ENCODE measurements at regions of chr1 and their contacts with region 1.

Region 1: GRCh38 chr1:109161858-109162606 is 48.1 kb downstream of the ELAPOR1 start:
- DNase-seq: peak in 2 of 5 donors; percentile 5 to 25
- H3K4me3 ChIP-seq: no peak overlapping the region
- H3K4me3 Mint-ChIP-seq: peak overlapping the region in 6 of 7 donors; percentile 5 to 81 (median 55)
- H3K27ac ChIP-seq: no peak overlapping the region
- H3K27ac Mint-ChIP-seq: peak overlapping the region; percentile 48 to 96 (median 78)
- H3K4me1 ChIP-seq: peaks cover 7% of the 10 kb centered on the region
- H3K4me1 Mint-ChIP-seq: peaks cover 13 to 16% (median 16%) of the 10 kb centered on the region in 3 donors
- H3K27me3 ChIP-seq: no peaks in the 10 kb centered on the region
- H3K27me3 Mint-ChIP-seq: no peaks in the 10 kb centered on the region

Region 2: GRCh38 chr1:109083923-109084322 is 78.1 kb before region 1 on chr1:
- CTCF ChIA-PET with region 1: no interaction called
- POLR2A ChIA-PET with region 1: no interaction called
- DNase-seq: no peak
- H3K4me3 ChIP-seq: no peak overlapping the region
- H3K4me3 Mint-ChIP-seq: peak overlapping the region in 1 of 7 donors; percentile 41
- H3K27ac ChIP-seq: no peak overlapping the region
- H3K27ac Mint-ChIP-seq: no peak overlapping the region
- H3K4me1 ChIP-seq: no peaks in the 10 kb centered on the region
- H3K4me1 Mint-ChIP-seq: peaks cover 0 to under 1% (median 0%) of the 10 kb centered on the region in 3 donors
- H3K27me3 ChIP-seq: no peaks in the 10 kb centered on the region
- H3K27me3 Mint-ChIP-seq: peaks cover 0 to 5% of the 10 kb centered on the region in 2 donors

Region 3: DNA sequence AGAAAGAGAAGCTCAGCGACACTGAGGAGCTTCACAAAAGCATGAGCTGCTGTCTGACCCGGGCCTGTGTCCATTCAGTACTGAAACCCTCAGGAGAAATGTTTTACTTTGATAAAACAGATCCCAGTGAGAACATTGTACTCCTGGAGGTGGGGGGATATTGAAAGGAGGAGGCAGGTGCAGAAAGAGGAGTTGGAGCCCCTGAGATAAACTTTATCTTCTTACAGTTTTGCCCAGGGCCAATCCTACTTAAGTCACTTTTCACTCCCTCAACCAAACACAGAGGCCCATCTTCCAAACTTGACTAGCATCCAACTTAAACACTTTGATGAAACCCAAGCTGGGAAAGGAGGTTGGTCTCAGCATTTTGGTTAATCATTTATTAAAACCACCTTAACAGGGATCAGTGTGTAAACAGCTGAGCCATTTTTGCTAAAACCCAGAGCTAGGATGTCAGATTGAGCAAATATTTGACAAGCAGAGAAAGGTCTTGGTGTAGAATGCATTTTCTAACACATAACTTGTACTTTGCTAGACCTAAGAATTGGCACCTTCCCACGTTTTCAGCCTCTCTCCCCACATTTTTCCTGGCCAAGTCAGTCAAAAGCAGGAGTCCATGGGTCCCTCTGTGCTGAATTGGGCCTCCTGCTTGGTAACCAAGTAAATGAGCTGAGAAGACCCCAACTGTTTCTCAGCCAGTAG is 19.2 kb after region 1 on chr1:
- CTCF ChIA-PET with region 1: no interaction called
- POLR2A ChIA-PET with region 1: interaction called, 11 read pairs
- DNase-seq: no peak
- H3K4me3 ChIP-seq: no peak overlapping the region
- H3K4me3 Mint-ChIP-seq: no peak overlapping the region
- H3K27ac ChIP-seq: peak overlapping the region; percentile 6
- H3K27ac Mint-ChIP-seq: no peak overlapping the region
- H3K4me1 ChIP-seq: no peaks in the 10 kb centered on the region
- H3K4me1 Mint-ChIP-seq: no peaks in the 10 kb centered on the region
- H3K27me3 ChIP-seq: no peaks in the 10 kb centered on the region
- H3K27me3 Mint-ChIP-seq: peaks cover 0 to 2% of the 10 kb centered on the region in 2 donors

Region 4: DNA sequence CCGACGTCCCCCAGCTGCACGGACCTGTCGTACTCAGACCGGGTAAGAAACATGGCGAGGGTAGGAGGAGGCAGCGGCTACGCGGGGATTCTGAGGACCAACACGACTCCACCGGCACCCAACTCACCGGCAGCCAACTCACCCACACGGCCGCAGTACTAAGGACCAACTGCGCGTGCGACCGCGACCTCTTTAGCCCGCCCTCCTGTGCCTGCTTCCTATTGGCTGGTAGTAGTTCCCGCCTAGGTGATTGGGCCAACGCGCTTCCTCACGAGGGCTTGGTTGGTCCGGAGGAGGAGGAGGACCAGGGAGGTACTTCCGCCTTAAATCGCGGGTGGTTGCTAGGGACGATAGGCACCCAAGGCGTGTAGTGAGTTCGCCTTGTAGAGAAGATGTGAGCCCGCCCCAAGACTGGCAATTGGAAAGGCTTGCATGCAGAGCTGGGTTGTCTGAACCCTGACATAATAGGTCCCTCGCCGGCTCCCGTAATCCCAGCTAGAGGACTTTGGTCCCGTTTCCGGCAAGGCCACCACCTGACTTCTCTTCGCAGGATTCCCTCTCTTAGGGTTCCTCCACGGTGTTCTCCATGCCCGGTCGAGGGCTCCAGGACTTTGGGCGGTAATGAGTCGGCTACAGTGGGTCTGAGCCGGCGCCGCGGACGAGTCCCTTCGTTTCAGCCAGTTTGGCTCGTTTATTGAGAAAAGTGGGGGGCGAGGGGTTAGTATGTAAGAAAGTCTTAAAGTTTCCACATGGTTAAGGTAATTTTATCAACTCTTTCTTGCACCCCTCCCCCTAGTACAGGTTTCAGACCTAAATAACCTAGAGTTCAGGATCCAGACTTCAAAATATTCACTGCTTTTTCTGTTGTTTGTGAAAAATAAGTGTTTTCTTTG is 264.5 kb after region 1 on chr1 and contains the start of gene PSMA5:
- CTCF ChIA-PET with region 1: no interaction called
- POLR2A ChIA-PET with region 1: no interaction called
- DNase-seq: peak; percentile 89 to 98 (median 94)
- H3K4me3 ChIP-seq: peak within 1 kb of the TSS; percentile 85
- H3K4me3 Mint-ChIP-seq: peak within 1 kb of the TSS; percentile 96 to 99 (median 98)
- H3K27ac ChIP-seq: peak within 1 kb of the TSS; percentile 94
- H3K27ac Mint-ChIP-seq: peak within 1 kb of the TSS; percentile 96 to 100 (median 99)
- H3K4me1 ChIP-seq: peaks cover 45% of the 10 kb centered on the region
- H3K4me1 Mint-ChIP-seq: peaks cover 35 to 47% (median 47%) of the 10 kb centered on the region in 3 donors
- H3K27me3 ChIP-seq: no peaks in the 10 kb centered on the region
- H3K27me3 Mint-ChIP-seq: no peaks in the 10 kb centered on the region
- total RNA-seq, gene PSMA5: 207 to 238 TPM